Tibial artery (tissue), 4 donors: ENCODE measurements at regions of chr4 and their contacts with region 1.

Region 1: DNA sequence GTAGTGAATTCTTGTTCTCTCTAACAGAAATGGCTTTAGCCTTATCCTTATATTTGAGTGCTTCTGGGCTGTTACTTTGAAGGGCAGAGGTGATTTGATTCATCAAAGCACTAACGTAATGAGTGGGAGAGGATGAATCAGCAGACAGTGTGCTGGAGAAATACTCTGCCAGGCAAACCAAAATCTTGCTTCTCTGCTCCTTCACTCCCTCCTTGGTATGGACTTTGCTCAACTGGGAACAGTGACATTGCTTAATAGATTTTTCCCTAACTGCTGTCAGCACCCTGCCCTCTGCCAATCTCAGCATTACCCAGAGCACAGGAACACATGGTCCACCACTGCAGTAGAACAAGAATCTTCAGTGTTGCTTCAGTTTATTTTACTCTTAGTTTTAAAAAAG is 56.0 kb downstream of the PDLIM5 start:
- DNase-seq: peak; percentile 82 to 91
- H3K4me3 ChIP-seq: no peak overlapping the region
- H3K27ac ChIP-seq: peak overlapping the region; percentile 71 to 76
- H3K4me1 ChIP-seq: peaks cover 5 to 90% (median 67%) of the 10 kb centered on the region in 4 donors
- H3K27me3 ChIP-seq: no peaks in the 10 kb centered on the region
- CTCF ChIP-seq: no peak

Region 2: DNA sequence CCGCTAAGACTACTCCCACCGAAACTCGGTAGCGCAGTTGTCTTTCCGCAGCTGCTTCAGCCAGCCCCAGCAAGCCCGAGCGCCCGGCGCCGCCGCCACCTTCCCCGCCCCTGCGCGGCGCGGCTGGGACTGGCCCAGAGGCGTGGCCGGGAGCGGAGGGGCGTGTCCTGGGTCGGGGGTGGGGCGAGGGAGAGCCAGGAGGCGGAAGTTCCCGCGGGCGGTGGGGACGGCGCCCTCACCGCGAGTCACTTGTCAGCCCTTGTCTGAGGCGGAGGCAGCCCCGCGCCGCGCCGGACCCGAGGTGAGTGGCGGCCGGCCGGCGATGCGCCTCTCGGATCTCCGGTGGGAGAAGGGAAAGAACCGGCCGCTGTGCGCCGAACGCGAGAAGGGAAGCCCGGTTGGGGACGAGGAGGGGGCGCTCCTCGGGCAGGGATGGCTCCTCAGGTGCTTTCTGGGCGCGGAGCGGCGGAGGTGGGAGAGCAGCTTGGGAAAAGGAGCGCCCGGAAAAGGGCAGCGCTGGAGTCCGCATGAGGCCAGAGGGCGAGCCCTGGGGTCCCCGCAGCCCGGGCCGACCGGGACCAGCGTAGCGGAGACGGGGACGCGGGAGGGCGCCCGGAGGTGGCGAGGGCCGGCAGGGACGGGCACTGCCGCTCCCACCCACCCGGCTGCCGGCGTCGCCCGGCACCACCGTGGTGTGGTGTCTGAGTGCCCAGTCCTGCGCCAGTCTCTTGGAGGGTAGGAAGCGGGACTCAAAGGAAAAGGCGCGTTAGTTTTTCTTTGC is 55.8 kb before region 1 on chr4 and contains the start of gene PDLIM5:
- intact Hi-C with region 1: loop called (anchors 10 kb)
- DNase-seq: peak; percentile 86 to 95
- H3K4me3 ChIP-seq: peak within 1 kb of the TSS; percentile 80 to 81
- H3K27ac ChIP-seq: peak within 1 kb of the TSS; percentile 95 to 96
- H3K4me1 ChIP-seq: peaks cover 0 to 59% (median 19%) of the 10 kb centered on the region in 4 donors
- H3K27me3 ChIP-seq: no peaks in the 10 kb centered on the region
- CTCF ChIP-seq: no peak

Region 3: GRCh38 chr4:94665500-94666404 is 158.0 kb after region 1 on chr4:
- intact Hi-C with region 1: no loop called
- DNase-seq: no peak
- H3K4me3 ChIP-seq: no peak overlapping the region
- H3K27ac ChIP-seq: no peak overlapping the region
- H3K4me1 ChIP-seq: peaks cover 0 to 16% (median 8%) of the 10 kb centered on the region in 4 donors
- H3K27me3 ChIP-seq: no peaks in the 10 kb centered on the region
- CTCF ChIP-seq: no peak

Region 4: GRCh38 chr4:94827481-94828110 is 319.9 kb after region 1 on chr4:
- intact Hi-C with region 1: no loop called
- DNase-seq: no peak
- H3K4me3 ChIP-seq: no peak overlapping the region
- H3K27ac ChIP-seq: no peak overlapping the region
- H3K4me1 ChIP-seq: no peaks in the 10 kb centered on the region
- H3K27me3 ChIP-seq: no peaks in the 10 kb centered on the region
- CTCF ChIP-seq: no peak